Activated CD4-positive, alpha-beta T cell treated with anti-CD3 and anti-CD28 coated beads, Interleukin-2, amount 10 ng/mL, durations not matched to agents 24 days and 14 days (primary cell): ENCODE measurements at regions of chrX and their contacts with region 1.

Region 1: DNA sequence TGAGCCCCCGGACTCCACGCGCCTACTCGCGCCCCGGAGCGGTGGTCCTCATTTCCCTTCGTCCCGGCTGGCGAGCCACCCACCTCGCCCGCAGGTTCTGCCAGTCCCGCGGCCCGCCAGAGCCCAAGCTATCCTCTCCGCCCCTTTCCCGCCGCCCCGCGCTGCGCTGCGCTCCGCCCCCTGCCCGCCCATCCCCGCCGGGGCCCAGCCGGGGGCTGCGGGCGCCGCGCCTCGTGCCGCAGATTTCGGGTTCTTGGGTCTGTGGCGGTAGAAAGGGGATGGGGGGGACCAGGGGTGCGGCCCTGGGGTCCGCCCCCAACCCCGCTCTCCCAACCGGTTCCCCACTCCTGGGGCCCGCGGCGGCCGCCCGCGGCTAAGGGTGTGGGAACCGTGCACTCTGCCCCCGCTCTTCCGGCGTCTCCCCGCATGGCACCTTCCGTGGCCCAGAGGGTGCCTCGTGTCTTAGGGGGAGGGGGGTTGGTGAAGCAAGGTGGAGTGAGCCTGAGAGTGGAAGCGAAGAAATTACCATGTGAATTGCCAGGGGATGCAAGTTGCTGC is 650.8 kb upstream of the DIPK2B start:
- DNase-seq: peak; percentile 85
- H3K4me3 Mint-ChIP-seq: peak overlapping the region; percentile 100
- H3K27ac Mint-ChIP-seq: peak overlapping the region; percentile 94
- H3K4me1 Mint-ChIP-seq: peaks cover 26% of the 10 kb centered on the region
- H3K27me3 Mint-ChIP-seq: no peaks in the 10 kb centered on the region

Region 2: DNA sequence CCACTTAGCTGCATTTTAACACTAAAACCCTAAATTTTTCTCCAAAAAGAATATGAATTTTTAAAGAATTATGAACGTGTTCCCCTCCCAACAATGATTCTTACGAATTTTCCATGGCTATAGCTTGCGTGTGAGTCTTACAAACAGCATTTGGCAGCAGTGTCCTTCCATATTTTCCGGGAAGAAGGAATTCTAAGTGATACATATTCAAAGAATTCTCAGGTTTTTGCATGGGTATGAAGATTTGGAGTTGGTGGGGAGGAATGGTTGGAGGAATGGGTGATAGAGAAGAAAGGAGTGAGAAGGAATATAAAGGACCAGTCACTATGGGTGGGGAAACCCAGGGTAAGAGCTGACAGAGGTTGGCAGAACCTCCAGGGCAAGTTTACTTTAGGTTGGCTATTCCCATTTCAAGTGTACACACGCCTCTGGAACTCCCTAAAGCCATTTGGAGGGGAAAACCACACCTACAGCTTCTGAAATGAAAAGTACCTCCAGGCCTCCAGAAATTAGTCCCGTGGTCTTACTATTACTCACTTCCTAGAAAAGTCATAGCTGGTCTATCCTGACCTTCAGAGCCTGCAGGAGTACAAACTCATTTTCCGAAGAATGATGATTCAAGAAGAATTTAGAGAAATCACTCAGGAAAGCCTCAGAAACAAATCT is 230.0 kb before region 1 on chrX:
- intact Hi-C with region 1: loop called (anchors 5 kb)
- DNase-seq: peak; percentile 51
- H3K4me3 Mint-ChIP-seq: peak overlapping the region; percentile 35
- H3K27ac Mint-ChIP-seq: peak overlapping the region; percentile 89
- H3K4me1 Mint-ChIP-seq: peaks cover 18% of the 10 kb centered on the region
- H3K27me3 Mint-ChIP-seq: no peaks in the 10 kb centered on the region

Region 3: GRCh38 chrX:45769761-45770582 is 81.5 kb before region 1 on chrX:
- intact Hi-C with region 1: loop called (anchors 2 kb)
- DNase-seq: peak; percentile 77
- H3K4me3 Mint-ChIP-seq: peak overlapping the region; percentile 84
- H3K27ac Mint-ChIP-seq: peak overlapping the region; percentile 95
- H3K4me1 Mint-ChIP-seq: peaks cover 40% of the 10 kb centered on the region
- H3K27me3 Mint-ChIP-seq: no peaks in the 10 kb centered on the region

Region 4: DNA sequence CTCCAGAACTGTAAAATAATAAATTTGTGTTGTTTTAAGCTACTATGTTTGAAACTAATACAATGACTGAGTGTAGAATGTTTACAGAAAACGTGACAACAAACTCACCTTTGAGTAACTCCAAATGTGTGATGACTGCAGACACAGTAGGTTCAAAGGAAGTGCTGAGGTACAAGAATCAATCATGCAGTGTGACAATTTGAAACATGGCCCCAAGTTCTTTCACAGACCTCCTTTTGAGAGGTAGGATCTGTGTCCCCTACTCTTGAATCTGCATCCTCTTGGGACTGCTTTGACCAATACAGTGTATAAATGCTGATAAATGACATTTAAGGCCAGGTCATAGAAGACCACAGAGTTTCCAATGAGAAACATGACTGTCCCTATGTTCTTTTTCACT is 16.9 kb after region 1 on chrX:
- intact Hi-C with region 1: no loop called
- DNase-seq: no peak
- H3K4me3 Mint-ChIP-seq: no peak overlapping the region
- H3K27ac Mint-ChIP-seq: no peak overlapping the region
- H3K4me1 Mint-ChIP-seq: peaks cover 2% of the 10 kb centered on the region
- H3K27me3 Mint-ChIP-seq: peaks cover 2% of the 10 kb centered on the region

Region 5: DNA sequence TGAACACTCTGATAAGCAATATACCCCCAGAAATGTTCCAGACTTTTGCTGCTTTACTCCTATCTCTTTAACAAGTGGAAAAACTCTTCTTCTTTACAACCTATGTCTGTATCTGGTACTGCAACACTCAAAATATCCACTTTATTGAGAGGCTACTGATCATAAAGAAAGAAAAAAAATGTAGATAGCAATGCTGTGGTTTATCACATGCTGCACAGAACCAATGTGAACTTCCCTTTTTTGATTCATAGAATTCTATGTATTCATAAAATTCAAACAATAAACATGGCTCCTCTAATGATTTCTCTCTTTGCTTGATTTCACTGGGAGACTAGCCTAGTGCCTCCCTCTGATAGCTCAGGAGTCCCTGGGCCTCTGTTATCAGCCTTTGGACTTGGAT is 470.2 kb after region 1 on chrX:
- intact Hi-C with region 1: loop called (anchors 2 kb)
- DNase-seq: no peak
- H3K4me3 Mint-ChIP-seq: no peak overlapping the region
- H3K27ac Mint-ChIP-seq: peak overlapping the region; percentile 62
- H3K4me1 Mint-ChIP-seq: peaks cover 48% of the 10 kb centered on the region
- H3K27me3 Mint-ChIP-seq: no peaks in the 10 kb centered on the region

Region 6: DNA sequence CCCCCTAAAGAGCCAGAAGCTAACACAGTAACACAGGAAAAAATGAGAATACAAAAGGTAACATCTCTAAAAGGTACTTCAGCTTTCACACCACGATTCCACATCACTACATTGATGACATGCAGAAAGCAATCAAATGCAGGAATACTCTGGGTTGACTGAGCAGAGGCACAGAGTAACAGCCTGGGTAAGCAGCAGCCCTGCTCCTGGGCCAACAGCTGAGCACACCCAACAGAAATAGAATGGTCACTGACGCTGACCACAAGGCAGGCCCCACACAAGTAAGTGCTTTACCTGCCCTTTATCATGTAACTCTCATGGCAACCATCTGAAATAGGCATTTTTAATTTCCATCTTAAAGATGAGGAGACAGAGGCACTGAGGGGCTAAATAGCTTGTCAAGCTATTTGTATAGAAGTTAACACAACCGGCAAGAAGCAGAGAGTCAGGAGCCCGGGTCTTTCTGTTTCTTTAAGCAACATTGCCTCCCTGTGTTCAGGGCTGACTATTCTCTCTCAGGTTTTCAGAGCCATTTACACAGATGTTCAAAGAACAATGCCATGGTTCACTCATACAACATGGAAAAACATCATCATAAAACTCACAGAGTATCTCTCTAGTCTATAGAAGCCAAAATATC is 524.9 kb after region 1 on chrX:
- intact Hi-C with region 1: loop called (anchors 2 kb)
- DNase-seq: peak; percentile 73
- H3K4me3 Mint-ChIP-seq: no peak overlapping the region
- H3K27ac Mint-ChIP-seq: no peak overlapping the region
- H3K4me1 Mint-ChIP-seq: peaks cover 3% of the 10 kb centered on the region
- H3K27me3 Mint-ChIP-seq: peaks cover 7% of the 10 kb centered on the region